HepG2 (cell line): ENCODE measurements at regions of chr7 and their contacts with region 1.

Region 1: DNA sequence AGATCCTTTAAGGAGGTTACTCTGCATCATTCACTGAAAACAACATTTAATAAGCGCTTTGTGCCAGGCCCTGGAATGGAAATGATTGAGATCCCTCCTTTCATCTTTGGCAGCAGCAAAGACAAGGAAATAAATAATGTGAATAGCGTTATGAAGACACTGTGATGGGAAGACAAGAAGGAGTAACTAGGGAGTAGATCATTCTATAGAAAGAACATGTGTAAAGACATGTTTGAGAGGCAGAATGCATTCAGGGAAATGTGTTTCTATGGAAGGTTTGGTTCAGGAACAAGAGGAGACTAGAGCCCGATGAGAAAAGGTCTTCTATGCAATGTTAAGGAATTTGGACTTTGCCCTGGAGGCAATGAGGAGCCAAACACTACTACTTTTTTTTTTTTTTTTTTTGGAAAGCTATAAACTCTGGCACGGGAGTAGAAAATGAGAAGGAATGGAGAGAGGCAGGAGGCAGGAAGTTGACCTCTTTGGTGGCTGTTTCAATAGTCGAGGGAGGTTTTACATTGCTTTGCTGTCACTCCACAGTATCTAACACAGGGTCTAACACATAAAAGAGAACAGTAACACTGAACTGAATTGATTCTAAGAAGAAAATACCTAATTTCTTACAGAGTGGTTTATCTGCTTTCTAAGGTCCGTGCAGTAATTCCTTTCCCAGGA is 44.9 kb downstream of the SMURF1 start:
- DNase-seq: peak; percentile 96
- ATAC-seq: peak; percentile 87
- H3K4me3 ChIP-seq: peak overlapping the region; percentile 46 to 62 (median 53)
- H3K27ac ChIP-seq: peak overlapping the region; percentile 98
- H3K4me1 ChIP-seq: peaks cover 78% of the 10 kb centered on the region
- H3K27me3 ChIP-seq: no peaks in the 10 kb centered on the region
- CTCF ChIP-seq: no peak
- EP300 ChIP-seq: peak; percentile 48 to 84; a peak in 3 of 4 replicates
- POLR2A ChIP-seq: peak; percentile 54 to 82; a peak in 3 of 4 replicates
- RAD21 ChIP-seq: no peak

Region 2: GRCh38 chr7:99109108-99110051 is 10.4 kb after region 1 on chr7:
- CTCF ChIA-PET with region 1: no interaction called
- POLR2A ChIA-PET with region 1: interaction called, 30 read pairs
- in situ Hi-C with region 1: no loop called
- intact Hi-C with region 1: loop called (anchors 1 kb)
- DNase-seq: peak; percentile 87
- ATAC-seq: peak; percentile 90
- H3K4me3 ChIP-seq: peak overlapping the region; percentile 6 to 58 (median 34); a peak in 5 of 6 replicates
- H3K27ac ChIP-seq: peak overlapping the region; percentile 76
- H3K4me1 ChIP-seq: peaks cover 71% of the 10 kb centered on the region
- H3K27me3 ChIP-seq: no peaks in the 10 kb centered on the region
- CTCF ChIP-seq: no peak
- EP300 ChIP-seq: peak in 1 of 2 experiments; percentile 45; a peak in 2 of 4 replicates
- POLR2A ChIP-seq: 0 out of 4 replicates have a peak, but pooled peaks of 1 of the 2 experiments have one; percentile 21
- RAD21 ChIP-seq: no peak

Region 3: GRCh38 chr7:99143853-99144672 is 45.1 kb after region 1 on chr7 and contains the start of gene SMURF1:
- CTCF ChIA-PET with region 1: no interaction called
- POLR2A ChIA-PET with region 1: interaction called, 18 read pairs
- in situ Hi-C with region 1: loop called (anchors 5 kb)
- intact Hi-C with region 1: loop called (anchors 5 kb)
- DNase-seq: peak; percentile 23
- ATAC-seq: peak; percentile 55
- H3K4me3 ChIP-seq: peak within 1 kb of the TSS; percentile 74 to 97 (median 89)
- H3K27ac ChIP-seq: peak within 1 kb of the TSS; percentile 86
- H3K4me1 ChIP-seq: peaks cover 37% of the 10 kb centered on the region
- H3K27me3 ChIP-seq: no peaks in the 10 kb centered on the region; a peak in 1 of 5 replicates
- CTCF ChIP-seq: 0 out of 2 replicates have a peak, but pooled peaks have one; percentile 13
- EP300 ChIP-seq: no peak
- POLR2A ChIP-seq: peak; percentile 40 to 90
- RAD21 ChIP-seq: peak; percentile 32; the same call in 1 of the 2 replicates
- total RNA-seq, gene SMURF1: 11.1 and 12.0 TPM in 2 replicates